Common myeloid progenitor, CD34-positive (primary cell): ENCODE measurements at regions of chr9 and their contacts with region 1.

Region 1: DNA sequence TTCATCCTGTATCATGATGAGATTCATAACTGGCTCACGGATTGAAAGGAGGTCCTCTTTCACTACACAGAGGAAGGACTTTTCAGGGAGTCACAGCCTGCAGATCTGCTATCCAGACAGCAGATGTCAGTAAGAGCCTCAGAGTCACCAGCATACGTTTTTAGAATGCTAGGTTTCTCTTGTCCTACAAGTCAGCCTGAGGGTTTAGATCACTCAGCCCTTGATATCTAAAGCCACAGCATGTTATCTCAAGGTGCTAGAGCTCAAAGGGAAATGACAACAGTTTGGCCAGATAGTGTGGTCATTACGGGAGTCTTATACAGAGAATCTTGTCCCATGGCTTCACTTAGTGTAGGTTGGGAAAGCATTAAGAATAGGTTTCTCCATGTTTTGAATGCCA is 30.9 kb upstream of the SLC46A2 start:
- DNase-seq: peak; percentile 61 to 80 (median 78)
- H3K4me3 ChIP-seq: no peak overlapping the region
- H3K27ac ChIP-seq: no peak overlapping the region
- H3K4me1 ChIP-seq: no peaks in the 10 kb centered on the region
- H3K27me3 ChIP-seq: peaks cover 0 to 4% (median 0%) of the 10 kb centered on the region in 5 experiments

Region 2: DNA sequence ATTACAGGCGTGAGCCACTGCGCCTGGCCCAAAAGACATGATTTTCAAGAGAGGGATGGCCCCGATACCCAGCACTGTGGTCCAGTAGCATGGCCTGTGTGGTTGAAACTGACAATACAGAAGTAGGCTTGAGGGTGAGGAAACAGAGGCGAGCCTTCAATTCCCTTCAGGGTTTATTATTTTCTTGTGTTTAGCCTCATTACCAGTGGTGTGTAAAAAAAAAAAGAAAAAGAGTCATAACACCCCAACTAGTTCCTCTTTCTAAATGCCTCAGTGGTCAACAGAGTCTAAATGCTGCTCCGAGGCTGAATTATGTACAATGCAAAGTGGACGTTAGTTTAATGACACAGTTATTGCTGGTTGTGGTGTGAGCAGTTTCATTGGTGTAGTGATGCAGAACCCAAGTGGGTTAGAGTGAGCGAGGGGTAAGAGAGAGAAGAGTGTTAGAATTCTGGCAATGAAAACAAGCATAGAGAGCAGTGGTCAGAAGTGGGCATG is 112.1 kb before region 1 on chr9:
- CTCF ChIA-PET with region 1: no interaction called
- POLR2A ChIA-PET with region 1: no interaction called
- DNase-seq: peak in 2 of 3 donors; percentile 39 to 59
- H3K4me3 ChIP-seq: peak overlapping the region in 3 of 7 experiments; percentile 3 to 34 (median 19)
- H3K27ac ChIP-seq: no peak overlapping the region
- H3K4me1 ChIP-seq: peaks cover 4 to 23% (median 14%) of the 10 kb centered on the region in 4 experiments
- H3K27me3 ChIP-seq: no peaks in the 10 kb centered on the region

Region 3: GRCh38 chr9:112933696-112934095 is 12.1 kb after region 1 on chr9:
- CTCF ChIA-PET with region 1: interaction called, 10 read pairs
- POLR2A ChIA-PET with region 1: no interaction called
- DNase-seq: peak in 2 of 3 donors; percentile 67 to 83
- H3K4me3 ChIP-seq: peak overlapping the region in 2 of 7 experiments; percentile 0 to 29
- H3K27ac ChIP-seq: no peak overlapping the region
- H3K4me1 ChIP-seq: peaks cover 0 to 19% (median 11%) of the 10 kb centered on the region in 4 experiments
- H3K27me3 ChIP-seq: no peaks in the 10 kb centered on the region

Region 4: DNA sequence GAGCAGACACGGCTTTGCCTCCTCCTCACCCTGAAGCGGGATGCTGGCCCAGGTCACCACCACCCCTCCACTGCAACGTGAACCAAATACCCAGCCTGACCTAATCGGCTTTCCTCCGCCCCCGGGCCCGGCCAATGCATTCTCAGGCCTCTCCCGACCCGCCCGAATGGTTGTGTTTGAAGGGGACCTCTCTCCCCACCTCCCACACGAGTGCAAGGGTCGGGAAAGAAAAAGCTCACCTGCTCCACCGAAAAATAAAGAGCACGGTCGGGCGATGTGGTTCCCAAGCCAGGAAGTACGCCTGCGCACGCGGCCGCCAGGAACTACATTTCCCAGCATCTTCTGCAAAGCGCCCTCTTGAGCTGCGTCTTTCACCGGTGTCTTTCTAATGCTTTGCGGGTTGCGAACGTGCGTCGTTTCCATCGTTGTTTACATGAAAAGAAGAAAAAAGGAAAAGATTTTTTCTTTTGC is 90.4 kb after region 1 on chr9 and contains the start of gene ZNF883:
- CTCF ChIA-PET with region 1: no interaction called
- POLR2A ChIA-PET with region 1: no interaction called
- DNase-seq: peak; percentile 22 to 76 (median 59)
- H3K4me3 ChIP-seq: peak within 1 kb of the TSS in 6 of 7 experiments; percentile 18 to 74 (median 50)
- H3K27ac ChIP-seq: no peak within 1 kb of the TSS
- H3K4me1 ChIP-seq: peaks cover 0 to 1% (median 0%) of the 10 kb centered on the region in 4 experiments
- H3K27me3 ChIP-seq: peaks cover 0 to 8% (median 0%) of the 10 kb centered on the region in 5 experiments